ENCODE measurements at regions of chr7 and their contacts with region 1.

Region 1: GRCh38 chr7:12322284-12322902 is 81.3 kb downstream of the VWDE start:
- DNase-seq: no peak
- ATAC-seq: peak; percentile 58; the same call in 1 of the 2 replicates
- H3K4me3 Mint-ChIP-seq: no peak overlapping the region
- H3K27ac Mint-ChIP-seq: no peak overlapping the region
- H3K4me1 Mint-ChIP-seq: peaks cover 24% of the 10 kb centered on the region
- H3K27me3 Mint-ChIP-seq: no peaks in the 10 kb centered on the region
- CTCF ChIP-seq: no peak

Region 2: GRCh38 chr7:12069757-12070156 is 252.6 kb before region 1 on chr7:
- CTCF ChIA-PET with region 1: interaction called, 11 read pairs
- POLR2A ChIA-PET with region 1: no interaction called
- DNase-seq: no peak
- ATAC-seq: peak; percentile 7; the same call in 1 of the 2 replicates
- H3K4me3 Mint-ChIP-seq: no peak overlapping the region
- H3K27ac Mint-ChIP-seq: no peak overlapping the region
- H3K4me1 Mint-ChIP-seq: peaks cover 17% of the 10 kb centered on the region
- H3K27me3 Mint-ChIP-seq: no peaks in the 10 kb centered on the region
- CTCF ChIP-seq: no peak

Region 3: GRCh38 chr7:12257582-12257981 is 64.8 kb before region 1 on chr7:
- CTCF ChIA-PET with region 1: no interaction called
- POLR2A ChIA-PET with region 1: no interaction called
- DNase-seq: no peak
- ATAC-seq: no peak
- H3K4me3 Mint-ChIP-seq: no peak overlapping the region
- H3K27ac Mint-ChIP-seq: no peak overlapping the region
- H3K4me1 Mint-ChIP-seq: no peaks in the 10 kb centered on the region
- H3K27me3 Mint-ChIP-seq: no peaks in the 10 kb centered on the region
- CTCF ChIP-seq: no peak

Measured in WTC11 (cell line).